Head of caudate nucleus (tissue), 42 donors: ENCODE measurements at regions of chr1 and their contacts with region 1.

Region 1: GRCh38 chr1:244047621-244048471 is 3.2 kb upstream of the ZBTB18 start:
- DNase-seq: peak; percentile 68 to 100 (median 99)

Region 2: GRCh38 chr1:243343970-243344937 is 703.6 kb before region 1 on chr1:
- intact Hi-C with region 1: loop called (anchors 10 kb)
- DNase-seq: peak in 1 of 42 donors; percentile 24

Region 3: DNA sequence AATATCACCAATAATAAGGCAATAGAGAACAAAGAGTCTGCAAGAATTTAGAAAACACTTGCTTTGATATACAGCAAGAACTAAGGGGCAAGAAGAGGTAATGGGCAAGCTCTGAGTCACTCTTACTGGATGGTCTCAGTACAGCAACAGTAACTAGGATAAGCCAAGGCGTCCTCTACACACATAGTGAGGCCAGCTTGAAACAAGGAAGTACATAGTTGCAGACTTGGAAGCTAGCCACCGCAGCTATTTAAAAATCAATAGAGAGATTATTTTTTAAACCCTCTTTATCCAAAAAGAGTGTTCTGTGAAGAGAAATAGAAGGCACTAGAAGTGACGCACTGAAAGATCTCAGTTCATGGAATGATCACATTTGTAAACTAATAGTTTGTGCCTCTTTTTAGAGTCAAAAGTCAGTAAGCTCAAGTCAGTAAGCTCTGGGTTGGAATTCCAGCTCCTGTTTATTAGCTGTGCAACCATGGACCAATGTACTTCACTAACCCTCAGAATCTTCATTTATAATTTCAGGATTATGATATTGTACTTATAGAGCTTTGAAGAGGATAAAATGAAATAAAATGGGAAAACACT is 316.4 kb before region 1 on chr1:
- intact Hi-C with region 1: loop called (anchors 10 kb)
- DNase-seq: peak in 21 of 42 donors; percentile 21 to 84 (median 43)

Region 4: GRCh38 chr1:244154872-244155531 is 107.2 kb after region 1 on chr1:
- intact Hi-C with region 1: loop called (anchors 10 kb)
- DNase-seq: peak; percentile 64 to 92 (median 79)